ENCODE measurements at regions of chr7 and their contacts with region 1.

Region 1: GRCh38 chr7:102874166-102874829 is 38.5 kb upstream of the LRRC17 start:
- DNase-seq: peak; percentile 29 to 89
- H3K4me3 ChIP-seq: no peak overlapping the region
- H3K27ac ChIP-seq: peak overlapping the region; percentile 90
- H3K4me1 ChIP-seq: peaks cover 43% of the 10 kb centered on the region
- H3K27me3 ChIP-seq: no peaks in the 10 kb centered on the region
- CTCF ChIP-seq: no peak

Region 2: GRCh38 chr7:102456327-102456726 is 418.0 kb before region 1 on chr7:
- CTCF ChIA-PET with region 1: no interaction called
- POLR2A ChIA-PET with region 1: no interaction called
- intact Hi-C with region 1: no loop called
- DNase-seq: peak in 1 of 2 experiments; percentile 65
- H3K4me3 ChIP-seq: no peak overlapping the region
- H3K27ac ChIP-seq: no peak overlapping the region
- H3K4me1 ChIP-seq: no peaks in the 10 kb centered on the region
- H3K27me3 ChIP-seq: no peaks in the 10 kb centered on the region
- CTCF ChIP-seq: no peak

Region 3: GRCh38 chr7:102836191-102836919 is 37.9 kb before region 1 on chr7:
- CTCF ChIA-PET with region 1: no interaction called
- POLR2A ChIA-PET with region 1: no interaction called
- intact Hi-C with region 1: loop called (anchors 1 kb)
- DNase-seq: peak; percentile 7 to 77
- H3K4me3 ChIP-seq: no peak overlapping the region
- H3K27ac ChIP-seq: no peak overlapping the region
- H3K4me1 ChIP-seq: peaks cover 19% of the 10 kb centered on the region
- H3K27me3 ChIP-seq: no peaks in the 10 kb centered on the region
- CTCF ChIP-seq: no peak

Region 4: DNA sequence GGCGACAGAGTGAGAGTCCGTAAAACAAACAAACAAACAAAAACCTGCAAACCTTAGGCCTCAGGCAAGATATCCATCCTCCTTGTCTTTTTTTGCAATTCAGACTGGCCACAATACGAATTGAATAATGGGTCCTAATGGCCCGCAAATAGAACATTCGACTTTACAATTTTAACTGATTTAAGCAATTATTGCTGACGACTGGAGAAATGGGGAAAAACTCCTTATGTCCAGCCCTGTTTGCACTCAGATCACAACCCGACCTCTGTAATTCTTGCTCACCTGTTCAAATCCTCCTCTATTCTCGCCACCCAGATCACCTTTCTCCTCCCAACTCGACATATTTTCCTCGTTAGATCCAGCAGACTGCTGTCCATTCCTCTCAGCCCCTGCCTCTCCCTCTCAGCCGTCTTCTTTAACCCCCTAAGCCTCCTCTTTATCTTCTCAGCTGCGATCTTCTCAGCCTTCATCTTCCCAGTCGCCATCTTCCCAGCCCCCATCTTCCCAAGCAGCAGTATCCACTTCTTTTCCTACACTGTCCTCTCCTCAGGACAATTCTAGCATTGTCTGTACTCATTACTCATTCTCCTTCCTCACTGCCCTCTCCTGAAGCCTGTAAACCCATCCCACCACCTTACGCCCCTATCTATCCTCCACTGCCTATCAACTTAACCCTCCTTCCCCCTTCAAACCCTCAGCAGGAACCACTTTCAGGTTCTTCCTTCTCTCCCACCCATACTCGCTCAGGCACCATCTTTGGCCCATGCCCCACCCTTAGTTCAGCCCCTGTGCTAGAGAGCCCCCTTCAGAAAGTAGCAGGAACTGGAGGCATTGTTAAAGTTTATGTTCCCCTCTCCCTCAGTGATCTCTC is 100.3 kb after region 1 on chr7:
- CTCF ChIA-PET with region 1: no interaction called
- POLR2A ChIA-PET with region 1: no interaction called
- intact Hi-C with region 1: loop called (anchors 5 kb)
- DNase-seq: no peak
- H3K4me3 ChIP-seq: no peak overlapping the region
- H3K27ac ChIP-seq: no peak overlapping the region
- H3K4me1 ChIP-seq: peaks cover 12% of the 10 kb centered on the region
- H3K27me3 ChIP-seq: no peaks in the 10 kb centered on the region
- CTCF ChIP-seq: no peak

Region 5: DNA sequence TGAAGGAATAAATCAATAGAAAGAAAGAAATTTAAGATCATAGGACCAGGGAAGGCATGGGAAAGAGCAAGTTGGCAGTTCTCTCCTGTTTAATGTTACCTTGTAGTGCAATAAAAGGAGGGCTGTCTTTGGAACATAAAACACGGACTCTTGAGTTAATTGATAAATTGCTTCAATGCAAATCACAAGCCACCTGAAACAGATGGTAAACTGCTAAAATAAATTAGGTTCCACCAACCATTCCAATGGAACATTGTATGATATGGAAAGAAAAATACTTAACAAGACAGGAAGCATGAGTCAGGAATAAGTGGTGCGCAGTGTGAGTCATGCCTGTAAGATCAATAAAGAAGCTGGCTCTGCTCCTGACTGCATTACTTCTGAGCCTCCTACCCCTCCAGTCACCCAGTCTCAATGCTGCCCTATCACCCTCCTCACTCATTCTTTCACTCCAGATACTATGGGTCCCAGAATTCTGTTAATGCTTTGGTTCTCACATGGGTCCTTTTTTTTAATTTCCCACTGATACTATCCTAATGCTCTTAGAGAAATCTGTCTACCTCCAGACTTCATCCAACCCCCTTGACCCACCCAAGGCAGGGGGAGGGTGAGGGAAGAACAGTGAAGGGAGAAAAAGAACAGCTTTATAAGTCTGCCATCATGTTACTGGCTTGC is 117.4 kb after region 1 on chr7:
- CTCF ChIA-PET with region 1: no interaction called
- POLR2A ChIA-PET with region 1: no interaction called
- intact Hi-C with region 1: loop called (anchors 2 kb)
- DNase-seq: peak; percentile 55 to 89
- H3K4me3 ChIP-seq: no peak overlapping the region
- H3K27ac ChIP-seq: peak overlapping the region; percentile 79
- H3K4me1 ChIP-seq: peaks cover 35% of the 10 kb centered on the region
- H3K27me3 ChIP-seq: no peaks in the 10 kb centered on the region
- CTCF ChIP-seq: no peak

Region 6: DNA sequence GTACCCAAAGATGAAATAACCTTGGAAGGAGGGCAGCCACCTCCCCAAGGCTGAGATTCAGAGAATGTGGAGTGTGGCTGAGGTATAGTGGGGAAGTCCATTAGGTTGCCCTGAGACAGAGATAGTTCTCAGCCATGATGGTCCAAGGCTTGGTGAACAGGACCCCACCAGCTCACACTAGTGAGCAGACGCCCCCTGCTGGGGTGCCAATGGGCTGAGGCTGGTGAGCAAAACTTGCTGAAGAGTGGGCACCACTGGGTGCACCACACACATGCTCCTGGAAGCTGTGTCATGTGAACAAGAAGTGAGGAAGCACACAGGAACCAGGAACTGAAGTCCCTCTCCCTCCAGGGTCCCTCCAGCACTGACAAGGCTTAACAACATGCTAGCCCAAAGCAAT is 191.4 kb after region 1 on chr7:
- CTCF ChIA-PET with region 1: interaction called, 5 read pairs
- POLR2A ChIA-PET with region 1: interaction called, 38 read pairs
- intact Hi-C with region 1: loop called (anchors 5 kb)
- DNase-seq: peak in 1 of 2 experiments; percentile 23
- H3K4me3 ChIP-seq: no peak overlapping the region
- H3K27ac ChIP-seq: no peak overlapping the region
- H3K4me1 ChIP-seq: no peaks in the 10 kb centered on the region
- H3K27me3 ChIP-seq: no peaks in the 10 kb centered on the region
- CTCF ChIP-seq: peak; percentile 53

Region 7: GRCh38 chr7:103074519-103075336 is 200.4 kb after region 1 on chr7 and contains the starts of genes ARMC10 and FBXL13:
- CTCF ChIA-PET with region 1: interaction called, 3 read pairs
- POLR2A ChIA-PET with region 1: interaction called, 3 read pairs
- intact Hi-C with region 1: loop called (anchors 5 kb)
- DNase-seq: peak; percentile 78 to 95
- H3K4me3 ChIP-seq: peak within 1 kb of the TSS; percentile 92
- H3K27ac ChIP-seq: peak within 1 kb of the TSS; percentile 72
- H3K4me1 ChIP-seq: peaks cover 26% of the 10 kb centered on the region
- H3K27me3 ChIP-seq: no peaks in the 10 kb centered on the region
- CTCF ChIP-seq: no peak
- total RNA-seq, gene ARMC10: 53.3 and 66.0 TPM in 2 replicates
- total RNA-seq, gene FBXL13: 10.4 and 19.4 TPM in 2 replicates

Region 8: GRCh38 chr7:103134836-103135554 is 260.7 kb after region 1 on chr7:
- CTCF ChIA-PET with region 1: no interaction called
- POLR2A ChIA-PET with region 1: no interaction called
- intact Hi-C with region 1: no loop called
- DNase-seq: no peak
- H3K4me3 ChIP-seq: no peak overlapping the region
- H3K27ac ChIP-seq: no peak overlapping the region
- H3K4me1 ChIP-seq: peaks cover 5% of the 10 kb centered on the region; the same call in 1 of the 2 replicates
- H3K27me3 ChIP-seq: no peaks in the 10 kb centered on the region
- CTCF ChIP-seq: no peak

Region 9: DNA sequence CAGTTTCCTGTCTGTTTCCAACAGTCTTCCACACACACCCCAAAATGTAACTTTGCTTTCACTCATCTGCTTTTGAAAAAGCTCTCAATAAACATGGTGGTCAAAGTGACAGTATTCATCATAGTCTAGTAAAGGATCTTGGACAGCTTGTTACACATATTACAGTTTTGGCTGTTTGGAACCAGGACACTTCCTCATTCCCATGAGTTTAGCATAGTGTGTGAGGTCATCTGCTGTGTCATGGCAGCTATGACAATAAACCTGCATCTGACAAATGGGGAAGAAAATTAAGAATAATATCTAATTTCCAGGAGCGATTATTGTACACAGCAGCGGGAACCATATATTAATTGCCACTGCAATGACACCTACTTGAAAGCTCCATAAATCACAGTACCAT is 756.0 kb after region 1 on chr7:
- CTCF ChIA-PET with region 1: no interaction called
- POLR2A ChIA-PET with region 1: interaction called, 29 read pairs
- intact Hi-C with region 1: no loop called
- DNase-seq: peak; percentile 29 to 51
- H3K4me3 ChIP-seq: no peak overlapping the region
- H3K27ac ChIP-seq: no peak overlapping the region
- H3K4me1 ChIP-seq: peaks cover 23% of the 10 kb centered on the region; the same call in 1 of the 2 replicates
- H3K27me3 ChIP-seq: no peaks in the 10 kb centered on the region
- CTCF ChIP-seq: no peak

Measured in PC-9 (cell line).